Astrocyte of the cerebellum (primary cell): ENCODE measurements at regions of chr16 and their contacts with region 1.

Region 1: DNA sequence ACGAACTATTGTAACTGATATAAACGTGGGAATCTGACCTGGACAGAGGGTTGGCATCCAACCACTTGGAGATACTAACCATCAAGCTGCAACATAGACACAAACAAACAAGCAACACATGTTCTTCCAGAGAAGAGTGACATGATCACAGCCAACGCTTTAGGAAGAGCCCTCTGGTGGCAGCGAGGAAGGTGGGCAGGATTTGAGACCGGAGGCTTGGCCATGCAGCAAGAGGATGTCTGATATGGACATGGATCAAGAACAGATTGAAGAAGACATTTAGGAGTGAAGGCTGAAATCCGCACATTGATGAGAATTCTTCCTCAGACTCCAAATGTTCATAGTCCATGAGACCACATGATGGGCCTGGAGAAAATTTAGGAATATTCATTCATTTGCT is 40.3 kb upstream of the TNRC6A start:
- DNase-seq: no peak
- H3K4me3 ChIP-seq: no peak overlapping the region
- CTCF ChIP-seq: peak; percentile 81

Region 2: DNA sequence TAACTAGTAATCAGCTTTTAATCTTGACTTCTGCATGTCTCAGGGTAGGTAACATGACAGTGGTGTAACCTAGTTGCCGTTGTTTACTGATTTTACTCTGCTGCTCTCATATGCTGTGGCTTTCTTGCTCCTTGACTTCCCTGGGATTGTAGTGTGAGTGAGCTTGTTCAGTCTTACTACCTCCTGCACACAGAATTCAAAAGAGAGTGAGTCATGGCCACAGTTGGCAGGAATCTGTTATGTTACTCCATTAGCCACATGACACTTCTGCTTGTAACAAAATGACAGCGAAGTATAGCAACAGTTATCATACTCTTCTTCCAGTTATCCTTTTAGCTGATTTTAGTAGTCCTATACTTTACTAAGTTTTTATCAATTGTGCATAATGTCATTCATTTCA is 59.1 kb after region 1 on chr16:
- in situ Hi-C with region 1: loop called (anchors 10 kb)
- DNase-seq: peak; percentile 92
- H3K4me3 ChIP-seq: no peak overlapping the region
- CTCF ChIP-seq: no peak

Region 3: GRCh38 chr16:24789881-24790280 is 100.7 kb after region 1 on chr16:
- in situ Hi-C with region 1: no loop called
- DNase-seq: no peak
- H3K4me3 ChIP-seq: no peak overlapping the region
- CTCF ChIP-seq: no peak